Activated naive CD4-positive, alpha-beta T cell treated with anti-CD3 and anti-CD28 coated beads, Interleukin-2, amount 10 ng/mL, durations not matched to agents 7 days and 5 days (primary cell): ENCODE measurements at regions of chr15 and their contacts with region 1.

Region 1: DNA sequence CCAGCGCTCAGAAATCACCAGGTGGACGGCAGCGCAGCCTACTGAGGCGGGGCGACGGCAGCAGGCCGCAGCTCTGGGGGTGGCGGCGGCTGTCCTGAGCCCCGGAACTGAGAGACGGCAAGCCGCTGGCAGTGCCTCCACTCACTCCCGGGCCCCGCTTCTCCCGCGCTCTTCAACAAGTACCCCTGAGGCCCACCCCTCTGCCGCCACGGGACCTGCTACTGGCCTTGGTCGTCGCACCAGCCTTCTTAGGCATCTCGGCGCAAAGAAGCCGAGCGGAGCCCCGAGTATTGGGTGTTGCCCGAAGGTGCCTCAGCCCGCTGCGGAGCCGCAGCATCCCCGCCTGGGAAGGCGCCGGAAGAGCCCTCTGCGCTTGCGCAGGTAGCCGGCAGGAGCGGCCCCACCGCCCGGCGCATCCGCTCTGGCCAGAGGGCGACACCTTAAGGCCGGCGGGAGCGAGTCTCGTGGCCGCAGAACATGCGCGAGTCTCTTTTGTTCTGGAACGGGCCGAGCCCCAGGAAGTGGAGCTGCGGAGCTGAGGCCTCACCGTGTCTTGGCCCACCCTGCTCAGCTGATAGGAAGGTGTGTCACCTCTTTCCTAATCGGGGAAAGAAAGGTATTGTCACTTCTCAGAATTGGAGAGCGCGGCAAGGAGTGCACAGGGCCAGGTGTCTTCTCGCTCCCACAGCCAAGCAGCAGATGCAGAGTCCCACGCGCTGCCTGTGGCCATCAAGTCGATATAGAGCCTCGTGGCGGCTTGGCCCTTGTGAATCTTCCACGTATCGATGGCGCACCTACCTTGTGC is at the start of gene C15orf40:
- DNase-seq: peak; percentile 87
- H3K4me3 Mint-ChIP-seq: peak within 1 kb of the TSS; percentile 96
- H3K27ac Mint-ChIP-seq: peak within 1 kb of the TSS; percentile 97
- H3K4me1 Mint-ChIP-seq: peaks cover 42% of the 10 kb centered on the region
- H3K27me3 Mint-ChIP-seq: no peaks in the 10 kb centered on the region

Region 2: DNA sequence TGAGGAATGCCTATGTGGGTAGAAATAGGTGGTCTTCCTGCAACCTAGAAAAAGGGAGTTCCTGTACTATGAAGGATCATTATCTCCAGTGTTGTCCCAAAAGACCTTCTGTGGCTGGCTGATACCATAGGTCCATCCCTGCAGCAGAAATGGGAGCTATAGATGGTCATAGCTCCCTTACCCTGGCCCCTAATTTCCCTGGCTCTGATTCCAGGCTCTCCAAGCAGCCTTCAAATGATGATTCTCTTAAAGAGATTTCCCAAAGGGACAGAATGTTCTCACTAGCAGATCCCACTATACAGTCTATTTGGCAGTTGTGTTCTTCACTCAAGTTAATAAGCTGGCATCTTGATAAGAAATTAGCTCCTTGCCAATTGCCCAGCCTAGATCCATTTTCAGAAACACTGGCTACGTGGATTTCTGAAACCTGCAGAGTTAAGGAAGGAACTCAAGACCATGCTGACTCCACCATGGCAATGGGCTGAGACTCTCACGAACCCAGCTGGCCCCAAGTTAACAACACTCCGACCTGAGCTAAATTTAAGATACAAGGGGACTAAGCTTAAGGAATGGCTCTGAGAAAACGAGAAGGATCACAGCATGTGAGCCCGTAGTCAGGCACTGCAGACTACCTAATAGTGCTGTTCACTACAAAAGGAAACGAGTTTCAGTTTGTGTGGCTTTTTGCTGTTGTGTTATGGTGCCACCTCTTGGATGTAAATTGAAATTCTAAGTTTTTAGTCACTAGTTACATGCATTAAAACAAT is 11.4 kb before region 1 on chr15:
- CTCF ChIA-PET with region 1: interaction called, 20 read pairs
- DNase-seq: peak; percentile 55
- H3K4me3 Mint-ChIP-seq: peak overlapping the region; percentile 47
- H3K27ac Mint-ChIP-seq: no peak overlapping the region
- H3K4me1 Mint-ChIP-seq: peaks cover 8% of the 10 kb centered on the region
- H3K27me3 Mint-ChIP-seq: no peaks in the 10 kb centered on the region

Region 3: DNA sequence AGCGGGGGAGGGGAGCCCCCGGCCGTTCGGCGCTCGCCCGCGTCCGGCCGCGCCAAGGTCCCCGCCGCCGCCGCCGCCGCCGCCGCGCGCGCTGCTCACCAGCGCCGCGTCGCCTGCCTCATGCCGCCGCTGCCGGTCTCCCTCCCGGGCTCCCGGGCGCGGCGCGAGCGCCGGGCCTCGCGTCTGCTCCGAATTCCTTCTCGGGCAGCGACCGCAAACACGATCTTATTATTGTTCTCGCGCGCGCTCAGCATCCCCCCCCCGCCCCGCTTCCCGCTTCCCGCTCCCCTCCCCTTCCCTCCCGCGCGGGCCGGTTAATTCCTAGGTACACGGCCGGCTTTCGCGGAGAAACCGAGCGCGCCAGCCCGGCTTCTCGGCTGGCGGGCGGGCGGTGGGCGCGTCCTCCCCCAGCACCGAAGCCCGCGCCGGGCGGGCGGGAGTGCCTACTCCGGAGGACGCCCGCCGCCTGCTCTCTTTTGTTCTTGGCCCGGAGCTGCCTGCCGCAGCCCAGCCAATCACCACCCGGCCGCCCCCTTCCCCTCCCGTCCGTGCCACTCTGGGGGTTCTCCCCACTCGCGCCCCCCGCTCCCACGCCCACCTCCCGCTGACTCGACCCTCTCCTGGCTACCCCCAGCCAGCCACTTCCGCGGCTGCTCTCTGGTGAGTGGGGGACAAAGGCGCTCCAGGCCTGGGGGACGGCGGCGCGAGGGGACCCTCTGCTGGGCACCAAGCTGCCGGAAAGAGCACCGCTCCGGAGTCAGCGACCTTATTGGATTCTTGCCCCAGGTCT is 196.3 kb after region 1 on chr15 and contains the start of gene HDGFL3:
- CTCF ChIA-PET with region 1: interaction called, 10 read pairs
- DNase-seq: peak; percentile 66
- H3K4me3 Mint-ChIP-seq: peak within 1 kb of the TSS; percentile 85
- H3K27ac Mint-ChIP-seq: peak within 1 kb of the TSS; percentile 84
- H3K4me1 Mint-ChIP-seq: peaks cover 15% of the 10 kb centered on the region
- H3K27me3 Mint-ChIP-seq: peaks cover 26% of the 10 kb centered on the region